Activated CD4-positive, alpha-beta T cell treated with anti-CD3 and anti-CD28 coated beads for 36 hours (primary cell): ENCODE measurements at regions of chr19 and their contacts with region 1.

Region 1: DNA sequence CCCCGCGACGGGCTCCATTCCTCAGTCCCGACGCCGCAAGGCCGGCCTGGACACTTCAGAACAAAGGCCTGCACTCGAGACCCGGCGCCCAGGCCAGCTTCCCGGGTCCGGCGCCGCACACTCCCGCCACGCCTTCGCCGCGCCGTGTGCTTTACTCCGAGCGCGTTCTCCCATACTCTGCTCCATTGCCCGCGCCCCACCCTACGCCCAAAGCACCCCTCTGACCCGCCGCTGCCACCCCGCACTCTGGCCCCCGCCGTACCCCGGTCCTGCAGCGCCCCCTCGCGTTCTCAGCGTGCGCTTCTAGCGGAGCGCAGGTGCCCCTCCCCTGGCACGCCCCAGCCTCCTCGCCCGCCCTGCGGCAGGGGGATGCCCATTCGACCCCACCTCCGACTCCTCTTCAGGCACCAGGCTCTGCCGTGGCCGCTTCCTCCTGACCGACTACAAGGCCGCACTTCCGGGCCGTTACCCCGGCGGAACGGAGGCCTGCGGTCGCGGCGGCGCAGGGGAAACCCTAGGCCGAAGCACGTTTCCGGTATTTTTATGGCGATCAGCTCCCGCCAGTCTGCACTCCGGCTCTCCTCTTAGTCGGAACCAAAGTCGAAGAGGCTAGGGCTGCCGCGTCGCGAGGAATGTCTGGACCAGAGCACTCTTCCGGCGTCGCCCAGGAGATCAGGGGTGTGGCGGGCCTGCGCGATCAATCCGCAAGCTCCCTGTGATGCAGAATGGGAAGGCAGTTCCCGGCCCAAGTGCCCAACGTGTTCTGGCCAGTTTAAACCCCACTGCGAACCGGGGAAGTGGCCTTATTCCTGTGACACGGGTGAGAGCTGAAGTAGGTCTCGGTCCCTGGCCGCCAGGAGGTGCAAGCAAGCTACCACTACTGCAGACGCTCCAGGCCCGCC is at the start of gene ZBTB45:
- DNase-seq: peak; percentile 96
- ATAC-seq: peak; percentile 82
- H3K4me3 Mint-ChIP-seq: peak within 1 kb of the TSS; percentile 82
- H3K27ac Mint-ChIP-seq: peak within 1 kb of the TSS; percentile 94
- H3K4me1 Mint-ChIP-seq: peaks cover 39% of the 10 kb centered on the region
- H3K27me3 Mint-ChIP-seq: no peaks in the 10 kb centered on the region
- total RNA-seq, gene ZBTB45: 10.1 to 11.1 TPM

Region 2: DNA sequence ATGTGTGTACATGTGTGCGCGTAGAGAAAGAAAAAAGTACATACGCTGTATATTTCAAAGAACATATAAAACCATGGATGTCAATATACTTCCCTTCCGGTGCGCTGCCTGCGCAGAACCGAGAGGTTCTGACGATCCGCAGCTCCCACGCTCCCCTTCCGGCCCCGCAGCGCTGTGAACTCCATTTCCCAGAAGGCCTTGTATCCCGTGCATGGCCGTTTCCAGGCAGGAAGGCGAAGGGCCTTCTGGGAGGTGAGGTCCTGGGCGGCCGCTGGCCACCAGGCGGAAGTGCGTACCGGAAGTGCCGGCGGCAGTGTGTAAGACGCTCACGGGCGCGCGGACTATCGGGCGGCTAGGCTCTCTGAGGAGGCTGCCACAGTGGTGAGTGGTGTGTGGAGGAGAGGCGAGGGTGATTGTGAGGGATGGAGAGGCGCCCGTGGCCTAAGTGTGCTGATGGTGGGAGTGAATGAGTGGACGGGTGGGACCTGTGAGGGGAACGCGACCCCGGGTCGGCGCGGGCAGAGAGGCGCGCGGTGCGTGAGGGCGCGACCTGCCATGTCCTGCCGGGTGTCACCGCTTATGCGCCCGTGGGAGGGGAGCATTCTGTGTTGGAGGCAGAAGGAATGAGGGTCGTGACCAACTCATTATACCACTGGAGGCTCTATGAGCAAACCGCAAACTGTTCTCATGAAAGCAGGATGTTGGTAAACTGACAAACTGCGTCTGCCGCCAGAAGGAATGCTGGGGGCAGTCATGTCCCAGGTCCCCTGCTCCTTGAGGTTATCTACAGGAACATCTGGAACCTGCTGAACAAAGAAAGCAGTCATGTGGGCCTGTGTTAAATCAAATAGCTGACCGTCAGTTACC is 214.3 kb before region 1 on chr19 and contains the start of gene ERVK3-1:
- CTCF ChIA-PET with region 1: interaction called, 3 read pairs
- POLR2A ChIA-PET with region 1: no interaction called
- intact Hi-C with region 1: loop called in 1 of 2 experiments (anchors 1 kb)
- DNase-seq: peak; percentile 97
- ATAC-seq: peak; percentile 98
- H3K4me3 Mint-ChIP-seq: peak within 1 kb of the TSS; percentile 99
- H3K27ac Mint-ChIP-seq: peak within 1 kb of the TSS; percentile 100
- H3K4me1 Mint-ChIP-seq: peaks cover 52% of the 10 kb centered on the region
- H3K27me3 Mint-ChIP-seq: no peaks in the 10 kb centered on the region
- total RNA-seq, gene ERVK3-1: 38.6 to 53.6 TPM

Region 3: DNA sequence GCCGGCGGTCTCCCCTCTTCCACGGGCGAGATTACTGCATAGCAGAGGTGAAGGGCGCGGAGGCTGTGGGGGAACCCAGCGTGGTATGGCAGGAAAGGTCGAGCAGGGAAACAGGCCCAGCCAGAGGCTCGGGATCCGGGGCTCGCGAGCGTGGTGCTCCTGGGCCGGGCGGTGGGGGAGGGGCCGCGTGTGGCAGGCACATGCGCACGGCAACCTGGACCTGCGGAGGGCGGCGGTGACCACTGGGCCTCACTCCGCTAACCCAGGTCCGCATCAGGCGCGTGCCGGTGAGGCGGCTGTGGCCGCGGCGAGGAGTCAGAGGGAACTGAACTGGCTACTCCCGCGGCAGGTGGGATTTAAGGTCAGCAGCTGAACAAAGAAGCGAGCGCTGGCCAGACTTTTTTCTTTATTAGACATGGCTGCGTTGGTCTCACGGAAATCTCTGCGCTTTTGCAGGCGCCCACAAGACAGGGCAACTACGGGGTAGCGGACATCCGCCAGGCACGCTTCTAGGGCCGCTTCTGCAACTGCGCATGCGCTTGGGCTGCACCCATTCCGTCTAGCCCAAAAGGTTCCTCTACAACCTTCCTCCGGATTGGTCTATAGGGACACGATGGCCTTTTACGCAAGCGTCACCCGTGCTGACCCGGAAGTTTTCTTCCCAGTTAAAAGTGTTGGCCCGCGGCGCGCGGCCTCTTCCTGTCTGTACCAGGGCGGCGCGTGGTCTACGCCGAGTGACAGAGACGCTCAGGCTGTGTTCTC is 132.8 kb before region 1 on chr19 and contains the start of gene RPS5:
- CTCF ChIA-PET with region 1: no interaction called
- POLR2A ChIA-PET with region 1: no interaction called
- intact Hi-C with region 1: loop called in 1 of 2 experiments (anchors 1 kb)
- DNase-seq: peak; percentile 97
- ATAC-seq: peak; percentile 96
- H3K4me3 Mint-ChIP-seq: peak within 1 kb of the TSS; percentile 96
- H3K27ac Mint-ChIP-seq: peak within 1 kb of the TSS; percentile 97
- H3K4me1 Mint-ChIP-seq: peaks cover 33% of the 10 kb centered on the region
- H3K27me3 Mint-ChIP-seq: no peaks in the 10 kb centered on the region
- total RNA-seq, gene RPS5: 1,234 to 1,535 TPM

Region 4: GRCh38 chr19:58466760-58467589 is 52.6 kb before region 1 on chr19 and contains the start of gene ZNF324:
- CTCF ChIA-PET with region 1: no interaction called
- POLR2A ChIA-PET with region 1: no interaction called
- intact Hi-C with region 1: loop called in 1 of 2 experiments (anchors 1 kb)
- DNase-seq: peak; percentile 99
- ATAC-seq: peak; percentile 98
- H3K4me3 Mint-ChIP-seq: peak within 1 kb of the TSS; percentile 86
- H3K27ac Mint-ChIP-seq: peak within 1 kb of the TSS; percentile 47
- H3K4me1 Mint-ChIP-seq: peaks cover 22% of the 10 kb centered on the region
- H3K27me3 Mint-ChIP-seq: peaks cover 2% of the 10 kb centered on the region
- total RNA-seq, gene ZNF324: 4.7 to 7.5 TPM

Region 5: DNA sequence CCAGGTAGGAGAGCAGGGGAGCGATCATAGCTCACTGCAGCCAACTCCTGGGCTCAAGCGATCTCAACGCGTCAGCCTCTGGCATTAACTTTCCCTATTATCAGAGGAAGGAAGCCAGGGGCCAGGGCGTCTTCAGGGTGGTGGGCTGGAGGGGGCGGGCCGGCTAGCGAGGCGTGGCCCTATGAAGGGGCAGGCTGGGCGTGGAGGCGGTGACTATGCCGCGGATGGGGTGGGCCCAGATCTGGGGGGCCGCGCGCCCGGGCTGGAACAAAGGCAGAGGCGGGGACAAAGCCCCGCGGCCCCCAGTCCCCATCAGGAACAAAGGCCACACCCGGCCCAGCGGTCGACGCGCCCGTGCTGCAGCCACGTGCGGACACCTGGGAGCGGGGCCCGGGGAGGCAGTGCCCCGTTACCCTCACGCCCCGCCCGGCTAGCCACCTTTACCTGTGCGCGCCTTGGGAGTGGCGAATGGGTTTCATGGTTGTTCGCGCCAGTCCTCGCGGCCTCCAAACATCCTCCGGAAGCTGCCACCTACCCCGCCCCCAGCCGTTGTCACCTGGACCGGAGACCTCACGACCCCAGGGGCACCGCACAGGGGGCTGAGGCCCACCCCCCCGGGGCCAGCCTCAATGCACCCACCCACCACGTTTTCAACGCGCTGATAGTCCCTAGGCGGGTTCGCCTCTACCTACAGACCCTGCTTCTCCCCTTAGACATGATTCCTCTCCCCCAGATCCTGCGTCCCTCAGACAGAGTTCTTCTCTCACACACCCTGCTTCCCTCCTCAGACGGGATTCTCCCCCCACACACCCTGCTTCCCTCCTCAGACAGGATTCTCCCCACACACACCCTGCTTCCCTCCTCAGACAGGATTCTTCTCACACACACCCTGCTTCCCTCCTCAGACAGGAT is 18.9 kb after region 1 on chr19:
- CTCF ChIA-PET with region 1: interaction called, 26 read pairs
- POLR2A ChIA-PET with region 1: interaction called, 18 read pairs
- intact Hi-C with region 1: loop called in 1 of 2 experiments (anchors 1 kb)
- DNase-seq: peak; percentile 75
- ATAC-seq: peak; percentile 89
- H3K4me3 Mint-ChIP-seq: peak overlapping the region; percentile 73
- H3K27ac Mint-ChIP-seq: peak overlapping the region; percentile 72
- H3K4me1 Mint-ChIP-seq: peaks cover 14% of the 10 kb centered on the region
- H3K27me3 Mint-ChIP-seq: peaks cover 4% of the 10 kb centered on the region

Region 6: GRCh38 chr19:58572818-58573657 is 53.4 kb after region 1 on chr19 and contains the start of gene MZF1:
- CTCF ChIA-PET with region 1: interaction called, 78 read pairs
- POLR2A ChIA-PET with region 1: interaction called, 6 read pairs
- intact Hi-C with region 1: loop called (anchors 1 kb)
- DNase-seq: peak; percentile 100
- ATAC-seq: peak; percentile 69
- H3K4me3 Mint-ChIP-seq: peak within 1 kb of the TSS; percentile 95
- H3K27ac Mint-ChIP-seq: peak within 1 kb of the TSS; percentile 100
- H3K4me1 Mint-ChIP-seq: peaks cover 38% of the 10 kb centered on the region
- H3K27me3 Mint-ChIP-seq: no peaks in the 10 kb centered on the region
- total RNA-seq, gene MZF1: 14.3 to 15.0 TPM